CD4-positive, alpha-beta memory T cell (primary cell): ENCODE measurements at regions of chr12 and their contacts with region 1.

Region 1: GRCh38 chr12:132887513-132888351 is at the start of gene CHFR:
- DNase-seq: peak; percentile 93 to 97 (median 96)
- H3K4me3 ChIP-seq: peak within 1 kb of the TSS; percentile 80 to 95
- H3K4me3 Mint-ChIP-seq: peak within 1 kb of the TSS; percentile 95 to 99 (median 98)
- H3K27ac ChIP-seq: peak within 1 kb of the TSS; percentile 97
- H3K27ac Mint-ChIP-seq: peak within 1 kb of the TSS; percentile 99 to 100 (median 100)
- H3K4me1 ChIP-seq: peaks cover 24% of the 10 kb centered on the region
- H3K4me1 Mint-ChIP-seq: peaks cover 12 to 37% (median 25%) of the 10 kb centered on the region in 4 donors
- H3K27me3 ChIP-seq: no peaks in the 10 kb centered on the region
- H3K27me3 Mint-ChIP-seq: no peaks in the 10 kb centered on the region
- total RNA-seq, gene CHFR: 67.6 to 79.4 TPM

Region 2: DNA sequence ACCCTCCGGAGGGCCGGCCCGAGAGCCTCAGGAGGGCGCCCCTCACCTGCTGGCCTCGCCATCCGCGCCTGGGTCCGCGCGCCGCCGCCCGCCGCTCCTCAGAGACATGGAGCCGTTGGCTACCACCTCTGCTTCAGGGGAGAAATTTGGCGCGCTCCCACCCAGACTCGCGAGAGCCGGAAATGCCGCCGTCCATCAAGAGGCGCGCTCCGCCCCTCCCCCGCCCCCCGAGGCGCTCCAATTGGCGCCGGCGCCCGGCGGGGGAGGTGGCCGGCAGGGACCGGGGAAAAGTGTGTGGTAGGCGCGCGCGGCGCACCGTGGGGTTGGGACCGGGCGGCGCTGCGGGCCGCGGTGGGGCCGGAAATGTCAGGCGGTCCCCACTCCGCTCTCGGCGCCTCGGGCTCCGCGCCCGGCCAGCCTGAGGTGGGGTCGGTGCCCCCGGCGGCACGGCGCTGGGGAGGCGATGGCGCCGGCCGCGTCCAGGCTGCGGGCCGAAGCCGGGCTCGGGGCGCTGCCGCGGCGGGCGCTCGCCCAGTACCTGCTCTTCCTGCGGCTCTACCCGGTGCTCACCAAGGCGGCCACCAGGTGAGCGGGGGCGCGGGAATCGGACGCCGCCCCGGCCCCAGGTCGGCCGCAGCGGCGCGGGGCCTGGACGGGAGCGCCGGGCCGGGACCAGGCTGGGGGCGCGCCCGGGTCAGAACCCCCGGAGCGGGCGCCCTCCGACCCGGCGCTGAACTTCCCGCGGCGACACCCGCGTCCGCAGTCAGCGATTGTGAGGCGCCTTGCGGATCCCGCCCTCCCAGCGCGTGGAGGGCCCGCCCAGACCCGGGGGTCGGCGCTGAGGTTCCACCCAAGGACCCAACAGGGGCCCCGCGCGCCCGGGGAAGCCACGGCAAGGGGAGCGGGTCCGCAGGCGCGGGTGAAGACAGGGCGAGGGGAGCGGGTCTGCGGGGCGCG is 200.2 kb before region 1 on chr12 and contains the starts of genes POLE and PXMP2:
- CTCF ChIA-PET with region 1: no interaction called
- POLR2A ChIA-PET with region 1: no interaction called
- intact Hi-C with region 1: loop called (anchors 10 kb)
- DNase-seq: peak; percentile 91 to 93 (median 91)
- H3K4me3 ChIP-seq: peak within 1 kb of the TSS in 1 of 2 donors; percentile 45
- H3K4me3 Mint-ChIP-seq: peak within 1 kb of the TSS; percentile 78 to 90 (median 86)
- H3K27ac ChIP-seq: peak within 1 kb of the TSS; percentile 26
- H3K27ac Mint-ChIP-seq: peak within 1 kb of the TSS in 4 of 7 donors; percentile 47 to 74 (median 62)
- H3K4me1 ChIP-seq: peaks cover 13% of the 10 kb centered on the region
- H3K4me1 Mint-ChIP-seq: peaks cover 15 to 36% (median 20%) of the 10 kb centered on the region in 4 donors
- H3K27me3 ChIP-seq: no peaks in the 10 kb centered on the region
- H3K27me3 Mint-ChIP-seq: no peaks in the 10 kb centered on the region
- total RNA-seq, gene POLE: 69.5 to 75.4 TPM
- total RNA-seq, gene PXMP2: 4.2 to 7.2 TPM

Region 3: GRCh38 chr12:132761032-132761920 is 126.5 kb before region 1 on chr12 and contains the start of gene ANKLE2:
- CTCF ChIA-PET with region 1: no interaction called
- POLR2A ChIA-PET with region 1: interaction called, 11 read pairs
- intact Hi-C with region 1: loop called (anchors 1 kb)
- DNase-seq: peak; percentile 68 to 86 (median 70)
- H3K4me3 ChIP-seq: peak within 1 kb of the TSS; percentile 75 to 81
- H3K4me3 Mint-ChIP-seq: peak within 1 kb of the TSS; percentile 82 to 99 (median 93)
- H3K27ac ChIP-seq: peak within 1 kb of the TSS; percentile 89
- H3K27ac Mint-ChIP-seq: peak within 1 kb of the TSS; percentile 95 to 99 (median 97)
- H3K4me1 ChIP-seq: peaks cover 24% of the 10 kb centered on the region
- H3K4me1 Mint-ChIP-seq: peaks cover 14 to 27% (median 22%) of the 10 kb centered on the region in 4 donors
- H3K27me3 ChIP-seq: no peaks in the 10 kb centered on the region
- H3K27me3 Mint-ChIP-seq: no peaks in the 10 kb centered on the region
- total RNA-seq, gene ANKLE2: 95.6 to 101 TPM

Region 4: GRCh38 chr12:132834181-132834711 is 53.5 kb before region 1 on chr12:
- CTCF ChIA-PET with region 1: no interaction called
- POLR2A ChIA-PET with region 1: interaction called, 14 read pairs
- intact Hi-C with region 1: loop called (anchors 1 kb)
- DNase-seq: peak in 4 of 5 donors; percentile 25 to 36 (median 32)
- H3K4me3 ChIP-seq: no peak overlapping the region
- H3K4me3 Mint-ChIP-seq: peak overlapping the region; percentile 55 to 85 (median 76)
- H3K27ac ChIP-seq: peak overlapping the region; percentile 31
- H3K27ac Mint-ChIP-seq: peak overlapping the region; percentile 81 to 96 (median 87)
- H3K4me1 ChIP-seq: peaks cover 33% of the 10 kb centered on the region
- H3K4me1 Mint-ChIP-seq: peaks cover 25 to 44% (median 32%) of the 10 kb centered on the region in 4 donors
- H3K27me3 ChIP-seq: no peaks in the 10 kb centered on the region
- H3K27me3 Mint-ChIP-seq: no peaks in the 10 kb centered on the region

Region 5: GRCh38 chr12:133037207-133038005 is 149.7 kb after region 1 on chr12 and contains the start of gene ZNF84:
- CTCF ChIA-PET with region 1: no interaction called
- POLR2A ChIA-PET with region 1: interaction called, 5 read pairs
- intact Hi-C with region 1: loop called (anchors 5 kb)
- DNase-seq: peak; percentile 96 to 99 (median 98)
- H3K4me3 ChIP-seq: peak within 1 kb of the TSS in 1 of 2 donors; percentile 54
- H3K4me3 Mint-ChIP-seq: peak within 1 kb of the TSS; percentile 85 to 98 (median 94)
- H3K27ac ChIP-seq: peak within 1 kb of the TSS; percentile 77
- H3K27ac Mint-ChIP-seq: peak within 1 kb of the TSS; percentile 91 to 98 (median 96)
- H3K4me1 ChIP-seq: peaks cover 12% of the 10 kb centered on the region
- H3K4me1 Mint-ChIP-seq: peaks cover 3 to 14% (median 7%) of the 10 kb centered on the region in 4 donors
- H3K27me3 ChIP-seq: no peaks in the 10 kb centered on the region
- H3K27me3 Mint-ChIP-seq: no peaks in the 10 kb centered on the region
- total RNA-seq, gene ZNF84: 42.0 to 46.2 TPM

Region 6: DNA sequence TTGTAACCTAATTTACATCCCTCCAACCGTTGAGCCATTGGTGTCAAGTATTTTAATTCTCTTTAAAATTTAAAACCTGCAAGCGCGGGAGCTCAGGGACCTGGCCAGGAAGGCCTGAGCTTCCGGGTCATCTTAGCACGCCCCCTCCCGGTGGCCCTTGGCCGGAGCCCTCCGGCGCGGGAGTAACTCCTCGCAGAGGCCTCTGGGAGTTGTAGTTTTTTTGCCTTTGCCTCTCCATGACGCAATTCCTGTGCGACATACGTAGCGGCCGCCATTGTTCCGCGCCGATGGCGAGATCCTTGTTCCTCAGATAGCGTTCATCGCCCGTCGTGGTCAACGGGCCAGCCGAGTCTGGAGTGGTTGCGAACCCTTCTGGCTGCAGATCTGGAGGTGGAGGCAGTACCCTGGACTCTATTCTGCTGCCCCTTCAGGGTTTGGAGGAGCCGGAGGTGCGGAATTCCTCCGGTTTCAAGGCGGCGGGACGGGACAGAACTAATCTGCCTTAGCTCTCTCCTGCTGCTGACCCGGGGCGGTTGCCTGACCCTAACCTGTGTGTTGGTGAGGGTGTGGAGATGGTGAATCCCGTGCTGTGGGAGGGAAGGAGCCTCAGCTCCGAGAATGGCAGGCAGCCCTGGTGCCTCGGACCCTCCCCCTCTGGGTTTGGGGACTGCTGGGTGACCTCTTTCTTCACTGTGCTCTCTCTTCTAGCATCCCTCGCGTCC is 293.7 kb after region 1 on chr12 and contains the start of gene ZNF268:
- CTCF ChIA-PET with region 1: no interaction called
- POLR2A ChIA-PET with region 1: no interaction called
- intact Hi-C with region 1: loop called (anchors 1 kb)
- DNase-seq: peak; percentile 84 to 89 (median 85)
- H3K4me3 ChIP-seq: peak within 1 kb of the TSS; percentile 96 to 100
- H3K4me3 Mint-ChIP-seq: peak within 1 kb of the TSS; percentile 89 to 97 (median 94)
- H3K27ac ChIP-seq: peak within 1 kb of the TSS; percentile 73
- H3K27ac Mint-ChIP-seq: peak within 1 kb of the TSS; percentile 91 to 98 (median 96)
- H3K4me1 ChIP-seq: peaks cover 10% of the 10 kb centered on the region
- H3K4me1 Mint-ChIP-seq: peaks cover 19 to 34% (median 23%) of the 10 kb centered on the region in 4 donors
- H3K27me3 ChIP-seq: no peaks in the 10 kb centered on the region
- H3K27me3 Mint-ChIP-seq: no peaks in the 10 kb centered on the region
- total RNA-seq, gene ZNF268: 34.9 to 39.6 TPM